K562 (cell line): ENCODE measurements at regions of chr9 and their contacts with region 1.

Region 1: DNA sequence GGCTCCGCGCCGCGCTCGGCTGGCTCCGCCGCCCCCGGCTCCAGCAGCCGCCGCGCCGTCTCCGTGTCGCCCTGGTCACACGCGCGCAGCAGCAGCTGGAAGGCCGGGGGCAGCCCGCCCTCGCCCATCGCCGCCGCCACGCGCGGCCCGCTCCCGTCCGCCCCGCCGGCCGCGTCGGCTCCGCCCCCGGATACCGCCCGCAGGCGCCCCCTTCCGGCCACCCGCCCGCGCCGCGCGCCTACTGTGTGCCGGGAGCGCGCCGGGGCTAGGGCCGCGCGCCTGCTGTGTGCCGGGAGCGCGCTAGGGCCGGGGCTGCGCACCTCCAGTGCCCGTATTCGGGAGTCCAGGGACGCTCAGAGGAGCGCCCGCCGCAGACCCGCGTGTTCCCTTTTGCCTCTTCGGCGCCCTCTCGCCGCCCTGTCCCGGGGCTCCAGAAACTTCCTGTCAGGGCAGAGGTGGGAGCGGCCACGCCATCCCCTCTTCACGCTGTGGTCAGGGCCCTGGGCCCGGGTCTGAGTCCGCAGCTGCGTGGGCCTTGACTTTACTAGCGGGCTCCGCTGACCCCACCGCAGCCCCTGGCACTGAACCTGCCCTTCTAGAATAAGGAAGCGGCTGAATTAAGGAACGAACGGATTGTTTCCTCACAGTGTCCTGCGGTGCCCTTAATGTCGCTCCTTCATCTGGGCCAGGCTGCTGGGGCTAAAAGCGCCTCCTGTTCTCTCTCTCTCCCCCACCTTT is at the start of gene ANKS6:
- DNase-seq: peak; percentile 89 to 95 (median 94)
- ATAC-seq: peak; percentile 87
- H3K4me3 ChIP-seq: peak within 1 kb of the TSS; percentile 66
- H3K27ac ChIP-seq: peak within 1 kb of the TSS; percentile 71
- H3K4me1 ChIP-seq: peaks cover 27 to 30% of the 10 kb centered on the region in 2 experiments; a peak in 4 of 5 replicates
- H3K27me3 ChIP-seq: no peaks in the 10 kb centered on the region
- CTCF ChIP-seq: peak; percentile 19 to 72 (median 59); a peak in 4 of 6 replicates
- EP300 ChIP-seq: no peak
- POLR2A ChIP-seq: peak; percentile 68
- RAD21 ChIP-seq: peak in 1 of 2 experiments; percentile 19; a peak in 2 of 4 replicates
- polyA plus RNA-seq, gene ANKS6: 9.9 to 11.8 TPM

Region 2: GRCh38 chr9:98833090-98833956 is 36.8 kb after region 1 on chr9:
- CTCF ChIA-PET with region 1: no interaction called
- POLR2A ChIA-PET with region 1: interaction called, 3 read pairs
- in situ Hi-C with region 1: no loop called
- intact Hi-C with region 1: loop called (anchors 5 kb)
- DNase-seq: peak; percentile 92 to 99 (median 94)
- ATAC-seq: peak; percentile 96
- H3K4me3 ChIP-seq: peak overlapping the region; percentile 4; the same call in 1 of the 2 replicates
- H3K27ac ChIP-seq: peak overlapping the region; percentile 98
- H3K4me1 ChIP-seq: peaks cover 36 to 51% of the 10 kb centered on the region in 2 experiments
- H3K27me3 ChIP-seq: no peaks in the 10 kb centered on the region
- CTCF ChIP-seq: no peak; a peak in 1 of 6 replicates
- EP300 ChIP-seq: peak; percentile 94
- POLR2A ChIP-seq: peak; percentile 70
- RAD21 ChIP-seq: peak in 1 of 2 experiments; percentile 25; a peak in 1 of 4 replicates